GM10248 (cell line): ENCODE measurements at regions of chr6 and their contacts with region 1.

Region 1: DNA sequence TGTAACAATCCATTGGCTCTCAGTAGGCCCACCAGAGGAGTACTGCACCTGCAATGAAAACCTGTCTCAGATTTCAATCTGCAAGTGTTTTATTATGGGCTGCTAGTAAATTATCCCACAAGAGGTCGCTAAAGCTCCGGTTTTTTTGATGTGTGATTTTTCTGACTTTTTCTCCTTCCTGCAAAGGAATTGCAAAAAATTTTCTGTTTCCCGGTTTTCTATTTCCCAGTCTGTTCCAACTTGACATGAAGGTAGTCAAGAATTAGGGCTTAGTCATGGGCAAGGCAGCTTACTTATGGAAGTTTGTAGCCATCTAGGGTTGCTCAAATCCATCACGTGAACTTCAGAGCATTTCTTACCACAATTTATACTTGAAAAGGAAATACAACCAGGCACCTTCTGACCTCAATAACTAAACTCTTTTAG is 38.5 kb upstream of the AHI1 start:
- DNase-seq: peak; percentile 37
- CTCF ChIP-seq: peak; percentile 47

Region 2: GRCh38 chr6:134589512-134589911 is 946.5 kb before region 1 on chr6:
- CTCF ChIA-PET with region 1: no interaction called
- POLR2A ChIA-PET with region 1: no interaction called
- DNase-seq: no peak
- CTCF ChIP-seq: no peak

Region 3: GRCh38 chr6:135546680-135547418 is 10.8 kb after region 1 on chr6:
- CTCF ChIA-PET with region 1: interaction called, 15 read pairs
- POLR2A ChIA-PET with region 1: no interaction called
- DNase-seq: no peak
- CTCF ChIP-seq: no peak

Region 4: GRCh38 chr6:135555550-135555949 is 19.5 kb after region 1 on chr6:
- CTCF ChIA-PET with region 1: interaction called, 14 read pairs
- POLR2A ChIA-PET with region 1: no interaction called
- DNase-seq: peak; percentile 20
- CTCF ChIP-seq: no peak

Region 5: DNA sequence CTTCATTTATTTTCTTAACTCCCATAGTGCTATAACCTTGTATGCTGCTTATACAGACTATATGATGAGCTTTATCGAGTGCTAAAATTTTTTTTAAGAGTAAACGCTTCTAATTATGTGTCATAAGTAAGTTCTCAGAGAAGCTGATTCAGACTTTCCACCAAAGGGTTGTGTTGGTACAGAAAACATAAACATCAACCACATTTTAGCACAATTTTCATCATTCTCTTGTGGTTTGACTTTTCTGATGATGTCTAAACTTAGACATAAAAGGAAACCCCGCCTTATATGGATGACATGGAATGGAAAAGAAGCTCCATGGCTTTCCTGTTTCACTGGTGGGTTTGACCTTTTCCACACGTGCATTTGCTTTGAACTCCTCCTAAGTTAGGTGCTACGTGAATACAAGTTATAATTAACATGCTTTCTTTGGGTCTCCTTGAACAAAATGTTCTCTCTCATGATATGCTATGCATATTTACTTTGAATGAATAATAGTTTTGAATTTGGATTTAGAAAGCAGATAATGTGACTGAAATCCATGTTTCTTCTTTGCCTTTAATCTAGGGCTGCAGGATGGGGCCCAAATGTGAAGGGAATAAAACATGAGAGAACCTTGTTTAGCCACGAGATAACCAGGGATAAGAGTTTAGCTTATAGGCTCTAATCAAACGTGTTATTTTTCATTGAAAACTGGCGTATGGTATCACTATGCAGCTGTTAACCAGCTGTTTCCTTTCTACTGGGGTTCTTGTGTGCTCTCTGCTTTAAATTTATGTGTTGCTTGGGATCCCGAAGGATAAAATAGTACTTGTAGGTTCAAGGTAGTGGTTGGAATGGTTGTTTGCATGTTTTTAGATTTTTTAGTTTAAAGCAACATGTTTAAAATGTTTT is 88.6 kb after region 1 on chr6:
- CTCF ChIA-PET with region 1: interaction called, 11 read pairs
- POLR2A ChIA-PET with region 1: no interaction called
- DNase-seq: no peak
- CTCF ChIP-seq: no peak

Region 6: DNA sequence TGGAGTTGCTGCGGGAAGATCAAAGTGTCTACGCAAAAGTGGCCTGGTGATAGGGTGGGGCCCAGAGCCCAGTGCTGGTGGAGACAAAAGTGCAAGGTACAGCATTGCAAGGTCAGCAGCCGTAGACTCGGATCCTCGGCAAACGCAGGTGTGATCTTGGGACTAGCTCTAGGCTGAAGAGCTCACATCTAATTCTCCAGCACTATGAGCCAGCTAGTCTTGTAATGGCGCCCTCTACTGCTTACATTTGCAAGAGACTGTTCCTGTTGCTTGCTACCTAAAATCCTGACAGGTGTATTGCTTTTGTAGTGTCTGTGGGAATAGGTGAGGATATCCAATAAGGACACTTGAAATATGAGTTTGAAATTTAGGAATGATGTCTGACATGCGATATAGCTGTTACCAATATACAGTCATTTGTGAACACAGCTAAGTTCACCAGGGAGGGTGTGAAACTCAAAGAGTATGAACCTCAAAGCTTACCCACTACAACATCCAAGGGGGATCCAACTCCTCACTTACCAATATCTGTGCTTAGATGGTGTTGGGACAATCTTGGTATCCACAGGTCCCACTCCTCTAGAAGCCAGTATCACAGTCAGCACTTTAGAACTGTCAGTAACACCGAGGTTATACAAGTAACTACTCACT is 373.9 kb after region 1 on chr6:
- CTCF ChIA-PET with region 1: interaction called, 42 read pairs
- POLR2A ChIA-PET with region 1: no interaction called
- DNase-seq: peak; percentile 65
- CTCF ChIP-seq: peak; percentile 68

Region 7: DNA sequence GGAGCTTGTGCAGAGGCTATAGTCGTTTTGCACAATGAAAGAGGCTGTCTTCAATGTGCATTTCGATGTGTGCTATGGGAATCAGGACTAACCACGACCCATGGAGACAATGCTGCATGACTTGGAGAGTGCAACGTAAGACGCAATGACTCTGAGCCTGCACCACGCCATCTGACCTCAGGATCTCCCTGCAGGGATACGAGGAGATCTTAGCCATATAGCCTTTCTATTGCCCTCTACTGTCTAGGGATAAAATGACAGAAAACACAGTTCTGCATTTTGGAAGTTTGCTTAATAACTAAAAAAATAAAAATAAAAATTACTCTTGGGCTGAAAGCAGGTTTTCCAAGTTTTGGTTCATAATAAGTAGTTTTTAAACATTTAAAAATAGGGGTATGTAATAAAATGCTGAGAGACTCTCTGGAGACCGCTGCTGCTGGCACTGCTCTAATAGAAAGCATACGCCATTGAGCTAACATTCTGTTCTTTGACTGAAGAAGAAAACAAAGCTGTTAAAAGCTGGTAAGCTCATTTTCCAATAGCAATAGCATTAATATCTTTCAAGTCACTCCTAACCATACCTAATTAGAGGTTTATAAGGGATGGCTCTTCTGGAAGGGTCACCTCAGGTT is 402.7 kb after region 1 on chr6:
- CTCF ChIA-PET with region 1: interaction called, 10 read pairs
- POLR2A ChIA-PET with region 1: no interaction called
- DNase-seq: no peak
- CTCF ChIP-seq: peak; percentile 29

Region 8: DNA sequence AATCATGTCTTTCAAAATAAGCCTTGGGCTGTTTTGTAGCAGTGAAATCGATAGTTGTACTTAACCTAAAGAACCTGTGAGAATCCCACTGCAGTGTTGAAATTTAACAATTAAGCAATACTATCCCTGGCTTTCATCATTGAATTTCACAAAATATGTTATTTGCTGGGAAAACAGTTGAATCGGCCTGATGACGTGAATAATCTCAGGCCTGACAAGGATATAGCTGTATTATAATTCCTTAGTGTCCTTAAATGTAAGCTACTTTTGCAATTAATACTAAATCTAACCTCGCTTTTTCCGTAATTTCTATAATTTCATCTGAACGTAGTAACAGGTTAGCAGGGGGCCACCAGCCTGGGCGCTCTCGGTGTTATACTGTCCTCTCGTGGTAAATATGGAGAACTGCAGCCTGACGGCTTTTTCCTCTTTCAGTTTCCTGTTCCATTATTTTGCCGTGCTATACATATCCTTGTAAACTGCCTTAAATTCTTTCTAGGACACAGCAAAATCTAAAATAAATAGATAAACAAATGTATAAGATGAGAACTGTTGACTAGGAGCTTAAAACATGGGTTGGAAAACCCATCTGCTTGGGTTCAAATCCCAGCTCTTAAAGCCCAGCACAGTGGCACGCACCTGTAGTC is 690.1 kb after region 1 on chr6:
- CTCF ChIA-PET with region 1: interaction called, 46 read pairs
- POLR2A ChIA-PET with region 1: no interaction called
- DNase-seq: peak; percentile 57
- CTCF ChIP-seq: peak; percentile 95